CD4-positive, alpha-beta T cell (primary cell): ENCODE measurements at regions of chr19 and their contacts with region 1.

Region 1: GRCh38 chr19:50431343-50432220 is 1.1 kb upstream of the MYBPC2 start:
- DNase-seq: peak; percentile 78 to 94 (median 86)
- ATAC-seq: peak; percentile 90
- H3K4me3 ChIP-seq: peak overlapping the region; percentile 68
- H3K4me3 Mint-ChIP-seq: peak overlapping the region; percentile 92
- H3K27ac ChIP-seq: peak overlapping the region; percentile 37 to 58
- H3K27ac Mint-ChIP-seq: peak overlapping the region; percentile 76
- H3K4me1 ChIP-seq: peaks cover 28% of the 10 kb centered on the region
- H3K4me1 Mint-ChIP-seq: peaks cover 19% of the 10 kb centered on the region
- H3K27me3 ChIP-seq: peaks cover 6 to 19% of the 10 kb centered on the region in 2 experiments
- H3K27me3 Mint-ChIP-seq: peaks cover 28% of the 10 kb centered on the region
- CTCF ChIP-seq: no peak

Region 2: DNA sequence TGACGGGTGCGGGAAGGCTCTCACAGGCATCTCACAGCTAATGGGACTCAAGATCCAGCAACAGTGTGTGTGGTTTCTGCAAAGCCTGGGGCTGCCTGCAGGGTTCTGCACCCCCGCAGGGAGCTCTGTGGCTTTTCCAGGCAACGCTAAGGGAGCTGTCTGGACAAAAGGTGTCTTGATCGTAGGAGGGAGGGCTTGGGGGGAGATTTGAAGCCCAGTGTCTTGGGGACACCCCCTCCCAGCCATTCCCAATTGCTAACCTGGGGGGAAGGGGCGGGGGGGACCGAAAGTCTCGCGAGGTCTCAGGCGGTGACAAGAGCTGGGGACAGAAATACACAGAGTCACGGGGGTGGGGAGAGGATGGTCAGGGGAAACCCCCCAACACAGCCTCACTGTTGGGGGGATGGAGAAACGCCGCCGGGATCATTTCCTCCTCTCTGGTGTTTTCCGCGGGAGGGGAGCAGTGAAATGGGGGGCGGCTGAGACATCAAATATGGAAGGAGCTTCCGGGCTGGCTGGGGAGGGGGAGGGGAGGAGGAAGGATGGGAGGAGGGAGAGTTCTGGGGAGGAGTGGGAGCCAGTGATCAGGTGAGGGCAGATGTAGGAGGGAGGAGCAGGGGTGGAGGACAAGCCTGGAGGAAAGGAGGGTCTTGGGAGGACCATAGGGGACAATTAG is 115.7 kb before region 1 on chr19:
- CTCF ChIA-PET with region 1: no interaction called
- POLR2A ChIA-PET with region 1: no interaction called
- intact Hi-C with region 1: no loop called
- DNase-seq: peak in 2 of 14 experiments; percentile 38 to 50
- ATAC-seq: no peak
- H3K4me3 ChIP-seq: peak overlapping the region; percentile 12
- H3K4me3 Mint-ChIP-seq: peak overlapping the region; percentile 51
- H3K27ac ChIP-seq: no peak overlapping the region
- H3K27ac Mint-ChIP-seq: no peak overlapping the region
- H3K4me1 ChIP-seq: peaks cover 12% of the 10 kb centered on the region
- H3K4me1 Mint-ChIP-seq: peaks cover 23% of the 10 kb centered on the region
- H3K27me3 ChIP-seq: peaks cover 48 to 62% of the 10 kb centered on the region in 2 experiments
- H3K27me3 Mint-ChIP-seq: peaks cover 79% of the 10 kb centered on the region
- CTCF ChIP-seq: no peak

Region 3: DNA sequence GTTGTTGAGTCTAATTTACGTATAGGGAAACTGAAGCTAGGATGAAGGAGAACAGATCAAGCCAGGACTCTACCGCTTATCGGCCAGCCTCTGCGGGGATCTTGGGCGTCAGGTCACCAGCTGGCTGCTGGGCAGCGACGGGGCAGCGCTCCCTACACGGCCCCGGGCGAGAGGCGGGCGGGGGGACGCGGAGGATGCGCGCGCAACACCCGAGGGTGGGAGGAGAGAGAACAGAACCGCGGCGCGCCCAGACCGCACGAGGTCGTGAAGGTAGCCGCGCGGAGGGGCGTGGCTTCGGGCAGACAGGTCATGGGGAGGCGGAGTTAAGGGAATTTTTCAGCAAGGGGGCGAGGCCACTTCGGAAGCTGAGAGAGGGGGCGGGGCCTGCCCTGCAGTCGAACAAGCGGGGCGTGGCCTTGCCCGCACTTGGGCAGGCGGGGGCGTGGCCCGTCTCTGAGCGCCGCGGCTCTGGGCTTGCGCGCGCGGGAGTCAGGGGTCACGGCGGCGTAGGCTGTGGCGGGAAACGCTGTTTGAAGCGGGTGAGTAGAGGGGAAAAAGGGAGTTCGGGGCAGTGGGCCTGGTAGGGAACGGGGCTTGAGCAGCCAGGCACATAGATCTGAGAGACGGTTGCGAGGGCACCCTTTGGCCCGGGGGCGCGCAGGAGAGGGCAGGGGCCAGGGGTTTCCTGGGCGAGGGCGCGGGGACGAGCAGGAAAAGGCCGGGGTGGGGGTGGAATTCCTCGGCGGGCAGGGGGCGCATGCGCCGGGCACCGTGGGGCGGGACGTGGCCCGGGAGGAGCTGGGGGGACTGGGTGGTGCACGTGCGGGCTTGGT is 47.5 kb before region 1 on chr19 and contains the start of gene POLD1:
- CTCF ChIA-PET with region 1: no interaction called
- POLR2A ChIA-PET with region 1: no interaction called
- intact Hi-C with region 1: loop called in 1 of 2 experiments (anchors 2 kb)
- DNase-seq: peak; percentile 98 to 100 (median 99)
- ATAC-seq: peak; percentile 88
- H3K4me3 ChIP-seq: peak within 1 kb of the TSS; percentile 66
- H3K4me3 Mint-ChIP-seq: peak within 1 kb of the TSS; percentile 96
- H3K27ac ChIP-seq: peak within 1 kb of the TSS; percentile 70 to 81
- H3K27ac Mint-ChIP-seq: peak within 1 kb of the TSS; percentile 90
- H3K4me1 ChIP-seq: peaks cover 22% of the 10 kb centered on the region
- H3K4me1 Mint-ChIP-seq: peaks cover 38% of the 10 kb centered on the region
- H3K27me3 ChIP-seq: no peaks in the 10 kb centered on the region
- H3K27me3 Mint-ChIP-seq: peaks cover 6% of the 10 kb centered on the region
- CTCF ChIP-seq: no peak
- total RNA-seq, gene POLD1: 22.1 to 24.2 TPM

Region 4: DNA sequence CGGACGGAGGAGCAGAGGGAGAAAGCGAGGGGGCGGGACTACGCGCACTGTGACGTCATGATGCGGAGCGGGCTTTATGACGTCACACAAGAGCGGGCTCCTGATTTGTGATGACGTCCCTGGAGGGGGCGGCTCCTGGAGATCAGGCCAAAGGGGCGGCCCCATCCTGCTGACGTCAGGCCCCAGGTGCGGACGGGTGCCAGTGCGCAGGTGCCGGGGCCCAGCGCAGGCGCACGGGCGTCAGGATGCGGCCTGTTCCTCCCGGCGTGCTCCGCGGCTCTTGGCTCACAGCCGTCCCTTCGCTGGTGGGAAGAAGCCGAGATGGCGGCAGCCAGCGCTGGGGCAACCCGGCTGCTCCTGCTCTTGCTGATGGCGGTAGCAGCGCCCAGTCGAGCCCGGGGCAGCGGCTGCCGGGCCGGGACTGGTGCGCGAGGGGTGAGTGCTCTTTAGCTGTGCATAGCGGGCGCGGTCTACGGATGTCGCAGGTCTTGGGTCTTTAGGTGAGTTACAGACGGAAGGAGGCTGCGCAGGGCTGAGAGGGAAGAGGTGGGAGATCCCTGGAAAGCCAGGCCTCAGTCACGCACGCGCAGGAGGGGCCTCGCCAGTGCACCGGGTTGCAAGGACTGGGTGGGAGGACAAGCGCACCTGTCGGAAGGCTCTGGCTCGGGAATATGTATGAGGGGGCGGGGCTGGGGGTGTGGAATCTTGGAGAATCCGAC is 44.8 kb after region 1 on chr19 and contains the starts of genes EMC10 and GARIN5A:
- CTCF ChIA-PET with region 1: no interaction called
- POLR2A ChIA-PET with region 1: no interaction called
- intact Hi-C with region 1: loop called in 1 of 2 experiments (anchors 2 kb)
- DNase-seq: peak; percentile 81 to 98 (median 92)
- ATAC-seq: peak; percentile 95
- H3K4me3 ChIP-seq: peak within 1 kb of the TSS; percentile 79
- H3K4me3 Mint-ChIP-seq: peak within 1 kb of the TSS; percentile 95
- H3K27ac ChIP-seq: peak within 1 kb of the TSS; percentile 73 to 82
- H3K27ac Mint-ChIP-seq: peak within 1 kb of the TSS; percentile 95
- H3K4me1 ChIP-seq: peaks cover 43% of the 10 kb centered on the region
- H3K4me1 Mint-ChIP-seq: peaks cover 22% of the 10 kb centered on the region
- H3K27me3 ChIP-seq: no peaks in the 10 kb centered on the region
- H3K27me3 Mint-ChIP-seq: no peaks in the 10 kb centered on the region
- CTCF ChIP-seq: no peak
- total RNA-seq, gene EMC10: 80.0 to 80.3 TPM
- total RNA-seq, gene GARIN5A: 0.50 TPM in 1 of 2 experiments, not detected in the other

Region 5: DNA sequence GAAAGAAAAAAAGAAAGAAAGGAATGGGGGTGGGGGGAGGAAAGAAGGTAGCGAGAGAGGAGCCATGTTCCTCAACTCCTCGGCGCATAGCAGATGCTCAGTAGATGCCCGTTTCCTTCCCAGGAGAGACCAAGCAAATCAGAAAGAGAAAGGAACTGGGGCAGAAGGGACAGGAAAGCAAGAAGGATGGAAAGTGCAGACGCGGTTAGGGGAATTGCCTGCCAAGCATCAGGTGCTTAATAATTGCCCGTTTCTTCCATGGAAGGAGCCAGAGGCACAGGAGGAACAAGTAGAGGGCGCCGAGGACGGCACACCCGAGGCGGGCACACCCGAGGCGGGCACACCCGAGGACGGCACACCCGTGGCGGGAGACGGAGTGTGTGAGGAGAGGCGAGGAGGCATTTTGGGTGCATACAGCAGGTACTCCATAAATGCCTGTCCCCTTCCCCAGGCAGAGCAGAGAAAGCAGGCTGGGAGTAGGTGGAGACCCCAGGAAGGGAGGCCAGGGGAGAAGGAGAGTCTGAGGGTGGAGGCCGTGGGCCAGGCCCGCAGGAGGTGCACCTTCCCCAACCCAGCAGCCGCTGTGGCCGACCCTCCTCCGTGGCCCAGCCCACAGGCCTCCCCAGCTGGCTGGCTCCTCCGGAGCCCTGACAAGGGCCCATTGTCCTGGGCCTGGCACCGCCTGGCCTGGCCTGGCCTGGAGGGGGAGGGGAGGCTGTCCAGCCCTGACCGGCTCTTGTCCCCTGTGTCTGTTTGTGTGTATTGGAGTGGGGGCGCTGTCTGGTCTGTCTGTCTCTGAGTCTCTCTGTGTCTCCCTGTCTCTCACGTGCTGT is 64.8 kb after region 1 on chr19:
- CTCF ChIA-PET with region 1: no interaction called
- POLR2A ChIA-PET with region 1: no interaction called
- intact Hi-C with region 1: no loop called
- DNase-seq: peak in 1 of 14 experiments; percentile 29
- ATAC-seq: no peak
- H3K4me3 ChIP-seq: no peak overlapping the region
- H3K4me3 Mint-ChIP-seq: no peak overlapping the region
- H3K27ac ChIP-seq: no peak overlapping the region
- H3K27ac Mint-ChIP-seq: no peak overlapping the region
- H3K4me1 ChIP-seq: peaks cover 11% of the 10 kb centered on the region
- H3K4me1 Mint-ChIP-seq: peaks cover 15% of the 10 kb centered on the region
- H3K27me3 ChIP-seq: no peaks in the 10 kb centered on the region
- H3K27me3 Mint-ChIP-seq: no peaks in the 10 kb centered on the region
- CTCF ChIP-seq: no peak